ENCODE measurements at regions of chr1 and their contacts with region 1.

Region 1: GRCh38 chr1:108828022-108828961 is 28.6 kb downstream of the AKNAD1 start:
- DNase-seq: peak; percentile 57
- ATAC-seq: peak; percentile 71
- H3K4me3 ChIP-seq: peak overlapping the region in 1 of 2 experiments; percentile 46; a peak in 2 of 4 replicates
- H3K27ac ChIP-seq: peak overlapping the region; percentile 98
- H3K4me1 ChIP-seq: peaks cover 38% of the 10 kb centered on the region
- H3K27me3 ChIP-seq: no peaks in the 10 kb centered on the region
- CTCF ChIP-seq: peak; percentile 79

Region 2: GRCh38 chr1:108799001-108799400 is 29.3 kb before region 1 on chr1:
- CTCF ChIA-PET with region 1: no interaction called
- POLR2A ChIA-PET with region 1: no interaction called
- in situ Hi-C with region 1: no loop called
- intact Hi-C with region 1: no loop called
- DNase-seq: no peak
- ATAC-seq: no peak
- H3K4me3 ChIP-seq: no peak overlapping the region
- H3K27ac ChIP-seq: no peak overlapping the region
- H3K4me1 ChIP-seq: no peaks in the 10 kb centered on the region
- H3K27me3 ChIP-seq: no peaks in the 10 kb centered on the region
- CTCF ChIP-seq: no peak

Region 3: GRCh38 chr1:108858240-108858950 is 30.1 kb after region 1 on chr1:
- CTCF ChIA-PET with region 1: no interaction called
- POLR2A ChIA-PET with region 1: interaction called, 10 read pairs
- in situ Hi-C with region 1: no loop called
- intact Hi-C with region 1: no loop called
- DNase-seq: no peak
- ATAC-seq: no peak
- H3K4me3 ChIP-seq: no peak overlapping the region
- H3K27ac ChIP-seq: no peak overlapping the region
- H3K4me1 ChIP-seq: no peaks in the 10 kb centered on the region
- H3K27me3 ChIP-seq: no peaks in the 10 kb centered on the region
- CTCF ChIP-seq: no peak

Region 4: GRCh38 chr1:108877348-108878159 is 49.3 kb after region 1 on chr1:
- CTCF ChIA-PET with region 1: no interaction called
- POLR2A ChIA-PET with region 1: no interaction called
- in situ Hi-C with region 1: no loop called
- intact Hi-C with region 1: loop called (anchors 5 kb)
- DNase-seq: no peak
- ATAC-seq: no peak
- H3K4me3 ChIP-seq: peak overlapping the region; percentile 78 to 82
- H3K27ac ChIP-seq: peak overlapping the region; percentile 89
- H3K4me1 ChIP-seq: peaks cover 16% of the 10 kb centered on the region
- H3K27me3 ChIP-seq: no peaks in the 10 kb centered on the region
- CTCF ChIP-seq: no peak

Region 5: DNA sequence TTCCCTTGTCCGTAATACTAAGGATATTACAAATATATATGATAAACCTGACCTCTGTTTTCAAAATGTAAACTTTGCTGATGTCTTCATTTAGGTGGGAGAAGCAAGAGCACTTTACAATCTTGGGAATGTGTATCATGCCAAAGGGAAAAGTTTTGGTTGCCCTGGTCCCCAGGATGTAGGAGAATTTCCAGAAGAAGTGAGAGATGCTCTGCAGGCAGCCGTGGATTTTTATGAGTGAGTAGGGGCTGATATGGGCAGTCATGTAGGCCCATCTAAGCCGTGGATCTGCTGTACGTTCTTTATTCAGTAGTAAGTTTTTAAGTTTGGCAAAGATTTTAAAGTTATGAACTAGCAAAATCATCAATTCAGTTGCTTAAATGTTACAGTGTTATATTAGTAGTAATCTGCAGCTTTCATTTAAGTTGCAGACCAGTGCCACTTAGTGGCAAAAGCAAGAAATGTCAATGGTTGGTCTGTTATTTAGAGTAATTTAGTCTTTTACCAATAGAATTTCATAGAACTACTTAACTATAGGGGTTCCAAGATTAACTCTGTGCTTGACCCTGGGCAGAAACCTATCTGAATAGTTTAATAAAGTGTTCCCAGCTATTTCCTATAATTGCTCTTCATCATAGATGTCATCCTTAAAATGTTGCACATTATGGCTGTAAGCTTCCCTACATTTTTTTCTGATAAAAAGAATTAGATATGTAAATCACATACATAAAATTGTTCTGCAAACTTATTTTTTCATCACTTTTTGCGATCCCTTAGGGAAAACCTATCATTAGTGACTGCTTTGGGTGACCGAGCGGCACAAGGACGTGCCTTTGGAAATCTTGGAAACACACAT is 69.8 kb after region 1 on chr1:
- CTCF ChIA-PET with region 1: interaction called, 7 read pairs
- POLR2A ChIA-PET with region 1: interaction called, 6 read pairs
- in situ Hi-C with region 1: no loop called
- intact Hi-C with region 1: loop called (anchors 1 kb)
- DNase-seq: no peak
- ATAC-seq: peak; percentile 82
- H3K4me3 ChIP-seq: no peak overlapping the region
- H3K27ac ChIP-seq: no peak overlapping the region
- H3K4me1 ChIP-seq: no peaks in the 10 kb centered on the region; the same call in 1 of the 2 replicates
- H3K27me3 ChIP-seq: no peaks in the 10 kb centered on the region
- CTCF ChIP-seq: peak; percentile 63

Measured in Panc1 (cell line).